Left colon (tissue), 2 donors: ENCODE measurements at regions of chr17 and their contacts with region 1.

Region 1: DNA sequence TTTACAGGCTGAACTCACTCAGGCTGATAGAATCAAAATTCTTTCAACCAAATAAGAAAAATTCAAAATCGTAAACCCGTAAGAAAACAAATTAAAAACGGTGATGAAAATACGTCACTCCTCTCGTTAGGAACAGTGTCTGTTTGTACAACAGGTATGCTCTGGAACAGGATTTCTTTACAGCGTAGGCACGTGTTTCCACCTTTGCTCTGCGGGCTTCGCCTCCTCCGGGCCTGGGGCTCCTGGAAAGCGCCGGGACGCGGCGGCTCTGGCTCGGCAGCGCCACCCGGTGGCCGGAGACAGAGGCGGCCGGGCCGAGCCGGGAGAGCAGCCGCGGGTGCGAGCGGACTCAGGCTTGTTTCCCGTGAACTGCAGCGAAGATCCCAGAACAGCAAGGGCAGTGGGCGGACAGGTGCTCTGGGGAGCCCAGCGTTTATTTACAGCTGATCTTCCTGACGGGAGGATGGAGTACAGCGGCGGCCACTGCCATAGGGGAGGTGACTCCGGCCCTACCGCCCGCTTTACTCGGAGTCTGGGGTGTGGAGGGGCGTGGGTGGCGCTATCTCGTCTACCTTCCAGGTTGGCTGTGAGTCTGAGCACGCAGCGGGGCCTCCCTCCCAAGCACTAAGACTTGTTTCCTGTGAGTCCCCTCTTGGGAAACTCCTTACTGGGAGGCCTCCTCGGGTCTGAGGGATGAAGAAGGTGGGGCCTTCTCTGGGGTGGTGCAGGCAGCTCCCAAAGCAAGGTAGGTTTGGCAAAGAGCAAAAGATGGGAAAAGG is 40.5 kb upstream of the ATP2A3 start:
- DNase-seq: peak; percentile 76 to 78
- ATAC-seq: peak; percentile 70

Region 2: DNA sequence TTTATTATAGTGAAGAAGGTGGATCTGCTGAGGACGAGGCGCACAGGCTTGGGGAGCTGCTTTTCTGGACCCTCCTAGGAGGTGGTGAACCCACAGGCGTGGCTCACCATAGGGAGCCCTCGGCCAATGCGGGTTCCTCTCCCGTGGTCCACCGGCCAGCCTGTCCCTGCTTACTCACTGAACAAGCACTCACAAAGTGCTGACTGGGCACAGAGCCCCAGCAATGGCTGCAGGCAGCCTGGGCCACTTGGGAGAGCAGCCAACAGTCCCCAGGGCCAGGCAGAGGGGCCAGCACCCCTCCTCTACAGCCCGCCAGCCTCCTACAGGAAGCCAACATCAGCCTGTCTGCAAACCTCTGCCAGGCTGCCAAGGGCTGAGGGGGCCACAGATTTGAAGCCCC is 139.5 kb before region 1 on chr17:
- intact Hi-C with region 1: loop called in 1 of 2 experiments (anchors 10 kb)
- DNase-seq: peak in 1 of 2 donors; percentile 49
- ATAC-seq: no peak

Region 3: GRCh38 chr17:3913531-3914311 is 91.0 kb before region 1 on chr17:
- intact Hi-C with region 1: loop called in 1 of 2 experiments (anchors 10 kb)
- DNase-seq: peak; percentile 79 to 84
- ATAC-seq: peak; percentile 68